GM12878 (cell line): ENCODE measurements at regions of chr7 and their contacts with region 1.

Region 1: GRCh38 chr7:157336383-157337315 is at the start of gene DNAJB6:
- DNase-seq: peak; percentile 74
- ATAC-seq: peak; percentile 78
- H3K4me3 ChIP-seq: peak within 1 kb of the TSS; percentile 89
- H3K27ac ChIP-seq: peak within 1 kb of the TSS; percentile 66
- H3K4me1 ChIP-seq: peaks cover 22% of the 10 kb centered on the region
- H3K27me3 ChIP-seq: no peaks in the 10 kb centered on the region; a peak in 1 of 4 replicates
- CTCF ChIP-seq: no peak
- EP300 ChIP-seq: peak in 1 of 2 experiments; percentile 48; a peak in 1 of 4 replicates
- POLR2A ChIP-seq: peak; percentile 82
- RAD21 ChIP-seq: no peak
- polyA plus RNA-seq, gene DNAJB6: 38.1 to 38.2 TPM

Region 2: DNA sequence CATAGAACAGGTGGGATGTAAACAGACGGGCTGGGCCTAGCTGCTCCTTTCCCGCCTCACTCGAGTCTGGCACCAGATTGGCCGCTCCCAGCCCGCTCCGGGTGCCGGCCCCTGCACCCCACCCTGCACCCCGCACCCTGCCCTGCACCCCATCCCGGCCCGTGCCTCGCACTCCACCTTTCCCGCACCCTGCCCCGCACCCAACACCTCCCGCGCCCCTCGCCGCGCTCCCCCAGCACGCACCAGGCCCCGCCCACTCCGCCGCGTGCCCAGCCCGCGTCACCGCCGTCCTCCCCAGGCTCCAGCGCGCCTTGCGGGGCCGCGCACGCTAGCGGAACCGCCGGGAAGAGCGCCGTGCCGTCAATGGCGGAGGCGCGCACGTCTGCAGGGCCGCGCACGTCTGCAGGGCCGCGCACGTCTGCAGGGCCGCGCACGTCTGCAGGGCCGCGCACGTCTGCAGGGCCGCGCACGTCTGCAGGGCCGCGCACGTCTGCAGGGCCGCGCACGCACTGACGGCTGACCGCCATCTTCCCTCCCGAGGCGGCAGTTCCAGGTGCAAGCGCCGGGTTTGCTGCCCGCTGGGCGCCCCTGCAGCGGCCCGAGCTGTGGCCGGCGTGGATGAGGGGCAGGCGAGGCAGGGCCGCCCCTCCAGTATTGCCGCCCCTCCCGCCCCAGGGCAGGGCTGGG is 198.1 kb before region 1 on chr7 and contains the start of gene UBE3C:
- CTCF ChIA-PET with region 1: no interaction called
- POLR2A ChIA-PET with region 1: no interaction called
- RAD21 ChIA-PET with region 1: no interaction called
- SMC1A ChIA-PET with region 1: no interaction called
- in situ Hi-C with region 1: no loop called
- intact Hi-C with region 1: loop called (anchors 5 kb)
- DNase-seq: peak; percentile 59
- ATAC-seq: peak; percentile 90
- H3K4me3 ChIP-seq: peak within 1 kb of the TSS; percentile 89
- H3K27ac ChIP-seq: peak within 1 kb of the TSS; percentile 71
- H3K4me1 ChIP-seq: peaks cover 7% of the 10 kb centered on the region; the same call in 1 of the 2 replicates
- H3K27me3 ChIP-seq: no peaks in the 10 kb centered on the region
- CTCF ChIP-seq: no peak
- EP300 ChIP-seq: no peak
- POLR2A ChIP-seq: peak; percentile 80
- RAD21 ChIP-seq: no peak
- polyA plus RNA-seq, gene UBE3C: 7.9 to 10.8 TPM

Region 3: GRCh38 chr7:157208571-157209413 is 127.9 kb before region 1 on chr7:
- CTCF ChIA-PET with region 1: no interaction called
- POLR2A ChIA-PET with region 1: no interaction called
- RAD21 ChIA-PET with region 1: no interaction called
- SMC1A ChIA-PET with region 1: no interaction called
- in situ Hi-C with region 1: no loop called
- intact Hi-C with region 1: no loop called
- DNase-seq: no peak
- ATAC-seq: no peak
- H3K4me3 ChIP-seq: no peak overlapping the region
- H3K27ac ChIP-seq: no peak overlapping the region
- H3K4me1 ChIP-seq: no peaks in the 10 kb centered on the region
- H3K27me3 ChIP-seq: no peaks in the 10 kb centered on the region
- CTCF ChIP-seq: no peak
- EP300 ChIP-seq: no peak
- POLR2A ChIP-seq: no peak
- RAD21 ChIP-seq: no peak

Region 4: DNA sequence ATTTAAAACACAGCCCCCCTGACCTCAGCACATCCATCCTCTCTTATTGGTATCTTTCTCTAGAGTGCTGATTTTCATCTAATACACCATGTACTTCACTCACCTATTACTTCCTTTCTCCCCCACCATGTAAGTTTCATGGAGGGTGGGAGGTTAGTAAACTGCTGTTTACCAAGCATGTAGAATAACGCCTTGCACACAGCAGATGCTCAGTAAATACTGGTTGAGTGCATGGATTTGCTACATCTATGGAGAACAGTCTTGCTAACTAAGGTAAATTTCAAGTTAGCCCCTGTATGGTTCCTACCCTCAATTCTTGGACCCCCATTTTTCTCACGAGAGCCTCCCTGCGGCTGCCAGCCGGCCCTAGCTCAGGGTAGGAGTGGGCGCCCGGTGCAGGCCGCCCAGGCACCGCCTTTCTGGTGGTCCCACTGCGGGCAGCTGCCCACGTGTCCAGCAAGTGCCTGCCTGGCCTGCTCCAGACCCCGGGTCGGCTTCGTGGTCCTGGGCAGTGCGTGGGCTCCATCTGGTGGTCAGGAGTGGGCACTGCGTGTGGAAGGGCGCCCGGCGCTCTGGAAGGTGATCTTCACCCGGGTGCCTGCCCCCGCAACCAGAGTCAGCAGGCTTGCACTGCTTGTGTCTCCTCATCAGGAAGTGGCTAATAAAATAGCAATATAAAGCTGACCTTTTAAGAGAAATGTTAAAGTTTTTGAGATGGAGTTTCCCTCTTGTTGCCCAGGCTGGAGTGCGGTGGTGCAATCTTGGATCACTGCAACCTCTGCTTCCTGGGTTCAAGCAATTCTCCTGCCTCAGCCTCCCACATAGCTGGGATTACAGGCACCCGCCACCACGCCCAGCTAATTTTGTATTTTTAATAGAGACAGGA is 63.2 kb before region 1 on chr7:
- CTCF ChIA-PET with region 1: interaction called, 27 read pairs
- POLR2A ChIA-PET with region 1: interaction called, 5 read pairs
- RAD21 ChIA-PET with region 1: interaction called, 4 read pairs
- SMC1A ChIA-PET with region 1: interaction called, 13 read pairs
- in situ Hi-C with region 1: no loop called
- intact Hi-C with region 1: no loop called
- DNase-seq: no peak
- ATAC-seq: peak; percentile 91
- H3K4me3 ChIP-seq: no peak overlapping the region
- H3K27ac ChIP-seq: no peak overlapping the region
- H3K4me1 ChIP-seq: no peaks in the 10 kb centered on the region
- H3K27me3 ChIP-seq: no peaks in the 10 kb centered on the region; a peak in 1 of 4 replicates
- CTCF ChIP-seq: peak; percentile 95 to 99 (median 96)
- EP300 ChIP-seq: no peak
- POLR2A ChIP-seq: no peak
- RAD21 ChIP-seq: peak; percentile 87

Region 5: DNA sequence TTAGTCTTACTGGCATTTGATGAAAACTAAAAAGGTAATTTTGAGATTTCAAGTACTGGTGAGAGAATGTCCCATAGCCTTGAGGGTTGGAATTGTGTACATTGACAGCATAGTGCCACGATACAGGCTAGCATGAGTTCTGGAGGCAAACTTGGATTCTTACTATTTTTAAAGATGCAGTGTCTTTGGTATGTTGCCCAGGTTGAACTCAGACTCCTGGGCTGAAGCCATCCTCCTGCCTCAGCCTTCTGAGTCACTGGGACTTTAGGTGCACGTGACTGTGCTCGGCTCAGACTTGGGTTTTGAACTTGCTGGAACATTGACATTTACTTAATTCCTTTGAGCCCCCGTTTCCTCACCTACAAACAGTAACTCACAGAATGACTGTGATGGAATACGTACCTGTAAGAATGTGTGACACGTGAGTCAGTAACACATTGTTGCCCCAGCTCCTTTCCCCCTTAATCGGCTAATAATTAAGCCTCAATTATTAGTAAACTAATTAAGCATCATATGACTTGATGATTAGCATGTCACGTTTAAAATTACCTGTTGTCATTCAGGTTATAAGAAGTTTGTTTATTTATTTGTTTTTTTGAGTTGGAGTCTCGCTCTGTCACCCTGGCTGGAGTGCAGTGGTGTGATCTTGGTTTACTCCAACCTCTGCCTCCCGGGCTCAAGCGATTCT is 10.7 kb after region 1 on chr7:
- CTCF ChIA-PET with region 1: interaction called, 40 read pairs
- POLR2A ChIA-PET with region 1: interaction called, 21 read pairs
- RAD21 ChIA-PET with region 1: interaction called, 15 read pairs
- SMC1A ChIA-PET with region 1: interaction called, 12 read pairs
- in situ Hi-C with region 1: no loop called
- intact Hi-C with region 1: loop called (anchors 1 kb)
- DNase-seq: no peak
- ATAC-seq: no peak
- H3K4me3 ChIP-seq: no peak overlapping the region
- H3K27ac ChIP-seq: no peak overlapping the region
- H3K4me1 ChIP-seq: peaks cover 13% of the 10 kb centered on the region
- H3K27me3 ChIP-seq: no peaks in the 10 kb centered on the region
- CTCF ChIP-seq: no peak
- EP300 ChIP-seq: no peak
- POLR2A ChIP-seq: no peak
- RAD21 ChIP-seq: no peak